ENCODE measurements at regions of chr7 and their contacts with region 1.

Region 1: GRCh38 chr7:45407730-45408408 is 166.3 kb upstream of the ADCY1 start:
- DNase-seq: no peak
- ATAC-seq: no peak
- H3K4me3 ChIP-seq: no peak overlapping the region
- H3K27ac ChIP-seq: no peak overlapping the region
- H3K4me1 ChIP-seq: no peaks in the 10 kb centered on the region
- H3K27me3 ChIP-seq: no peaks in the 10 kb centered on the region
- CTCF ChIP-seq: no peak
- POLR2A ChIP-seq: no peak

Region 2: GRCh38 chr7:45435846-45436245 is 28.0 kb after region 1 on chr7:
- in situ Hi-C with region 1: no loop called
- intact Hi-C with region 1: loop called (anchors 2 kb)
- DNase-seq: no peak
- ATAC-seq: peak in 1 of 2 donors; percentile 68
- H3K4me3 ChIP-seq: no peak overlapping the region
- H3K27ac ChIP-seq: no peak overlapping the region
- H3K4me1 ChIP-seq: no peaks in the 10 kb centered on the region
- H3K27me3 ChIP-seq: no peaks in the 10 kb centered on the region
- CTCF ChIP-seq: no peak
- POLR2A ChIP-seq: no peak

Region 3: DNA sequence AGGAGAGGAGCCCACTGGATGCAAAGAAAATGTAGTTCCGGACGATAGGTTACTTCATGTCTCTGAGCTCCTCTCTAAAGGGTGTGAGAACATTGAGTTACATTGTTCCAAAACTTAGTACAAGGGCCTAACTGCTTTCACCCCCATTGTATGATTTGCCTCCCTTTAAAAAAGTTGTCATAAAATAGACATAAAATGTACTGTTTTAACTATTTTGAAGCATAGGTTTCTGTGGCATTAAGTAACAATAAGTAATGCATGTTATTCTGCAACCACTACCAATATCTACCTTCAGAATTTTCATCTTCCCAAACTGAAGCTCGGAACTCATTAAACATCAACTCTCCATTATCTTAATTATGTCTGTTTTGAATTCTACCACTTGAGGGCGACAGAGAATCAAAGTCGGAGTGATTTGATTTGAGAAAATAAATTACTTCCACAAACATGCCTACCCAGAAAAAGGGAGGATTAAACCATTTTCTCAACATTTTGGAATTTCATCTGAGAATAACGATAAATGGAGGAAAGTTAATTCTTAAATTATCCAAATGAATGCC is 483.1 kb after region 1 on chr7:
- in situ Hi-C with region 1: no loop called
- intact Hi-C with region 1: no loop called
- DNase-seq: no peak
- ATAC-seq: no peak
- H3K4me3 ChIP-seq: no peak overlapping the region
- H3K27ac ChIP-seq: no peak overlapping the region
- H3K4me1 ChIP-seq: no peaks in the 10 kb centered on the region
- H3K27me3 ChIP-seq: peaks cover 26 to 35% (median 28%) of the 10 kb centered on the region in 3 donors
- CTCF ChIP-seq: peak in 4 of 5 experiments; percentile 28 to 65 (median 64)
- POLR2A ChIP-seq: no peak